ENCODE measurements at regions of chr1 and their contacts with region 1.

Region 1: DNA sequence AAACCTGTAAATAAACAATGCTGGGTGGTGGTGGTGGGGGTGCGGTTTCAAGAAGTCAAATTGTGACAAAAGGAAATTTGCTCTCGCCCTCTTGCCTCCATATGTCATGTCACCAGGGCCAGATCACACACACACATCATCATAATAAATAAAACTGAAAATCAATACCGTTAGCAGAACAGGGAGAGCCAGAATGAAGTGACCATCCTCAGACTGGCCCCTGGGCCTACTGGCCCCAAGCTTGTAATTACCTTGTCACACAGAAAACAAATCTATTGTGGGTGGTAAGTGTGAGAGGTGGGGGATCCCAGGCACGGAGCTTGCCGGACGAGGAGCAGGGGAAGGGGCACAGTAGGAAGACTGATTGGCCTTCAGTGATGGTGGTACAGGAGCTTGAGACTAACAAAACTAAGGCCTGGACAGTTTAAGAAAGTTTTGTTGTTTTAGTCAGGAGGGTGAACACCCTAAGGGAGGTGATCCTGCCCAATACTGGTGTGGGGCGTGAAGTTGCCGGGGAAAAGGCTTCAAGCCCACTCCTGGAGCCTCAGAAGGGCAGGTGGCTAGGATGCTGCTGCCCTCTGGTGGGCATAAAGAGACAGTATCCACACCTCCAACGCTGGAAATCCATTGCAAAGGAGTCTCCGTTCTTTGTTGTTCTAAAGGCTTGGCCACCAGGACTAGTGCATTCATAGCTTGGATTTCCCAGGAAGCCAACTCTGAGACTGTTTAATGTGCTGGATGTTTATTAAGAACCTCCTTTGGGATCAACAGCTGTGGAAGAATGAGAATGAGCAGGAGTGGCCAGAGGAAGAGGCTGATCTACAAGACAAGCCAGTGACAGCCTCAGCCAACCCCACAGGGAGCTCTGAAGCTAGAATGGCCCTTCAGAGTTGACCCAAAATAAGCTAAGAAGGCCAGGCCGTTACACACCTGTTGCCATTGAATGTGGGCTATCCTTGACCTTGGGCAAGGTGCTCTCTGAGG is 8.1 kb upstream of the C1orf216 start:
- DNase-seq: peak; percentile 54
- H3K4me3 Mint-ChIP-seq: no peak overlapping the region
- H3K27ac Mint-ChIP-seq: no peak overlapping the region
- H3K4me1 Mint-ChIP-seq: no peaks in the 10 kb centered on the region
- H3K27me3 Mint-ChIP-seq: no peaks in the 10 kb centered on the region

Region 2: GRCh38 chr1:35564037-35564883 is 162.5 kb before region 1 on chr1:
- CTCF ChIA-PET with region 1: interaction called, 15 read pairs
- intact Hi-C with region 1: loop called (anchors 1 kb)
- DNase-seq: peak; percentile 92
- H3K4me3 Mint-ChIP-seq: no peak overlapping the region
- H3K27ac Mint-ChIP-seq: no peak overlapping the region
- H3K4me1 Mint-ChIP-seq: peaks cover 16% of the 10 kb centered on the region
- H3K27me3 Mint-ChIP-seq: no peaks in the 10 kb centered on the region

Region 3: GRCh38 chr1:35577071-35577998 is 149.4 kb before region 1 on chr1:
- CTCF ChIA-PET with region 1: interaction called, 21 read pairs
- intact Hi-C with region 1: no loop called
- DNase-seq: peak; percentile 76
- H3K4me3 Mint-ChIP-seq: peak overlapping the region; percentile 69
- H3K27ac Mint-ChIP-seq: peak overlapping the region; percentile 13
- H3K4me1 Mint-ChIP-seq: peaks cover 18% of the 10 kb centered on the region
- H3K27me3 Mint-ChIP-seq: peaks cover 20% of the 10 kb centered on the region

Region 4: DNA sequence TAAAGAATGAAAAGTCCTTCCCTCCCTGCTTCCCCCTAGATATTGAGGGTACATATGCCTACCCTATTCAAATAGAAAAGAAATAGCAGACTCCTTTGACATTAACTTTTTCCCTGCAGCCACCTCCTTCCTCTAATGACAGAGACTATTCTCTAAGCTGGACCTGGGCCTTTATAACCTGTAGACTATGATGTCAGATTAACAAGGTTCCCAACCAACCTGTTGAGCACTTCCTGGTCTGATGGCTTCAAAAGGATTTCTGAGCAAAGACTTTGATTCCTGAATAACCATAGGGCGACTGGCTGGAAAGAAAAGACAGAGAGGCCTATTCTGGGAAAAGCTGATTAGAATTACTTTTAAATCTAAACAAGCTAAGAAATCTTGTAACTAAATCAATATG is 10.4 kb after region 1 on chr1:
- CTCF ChIA-PET with region 1: interaction called, 11 read pairs
- intact Hi-C with region 1: no loop called
- DNase-seq: no peak
- H3K4me3 Mint-ChIP-seq: no peak overlapping the region
- H3K27ac Mint-ChIP-seq: no peak overlapping the region
- H3K4me1 Mint-ChIP-seq: no peaks in the 10 kb centered on the region
- H3K27me3 Mint-ChIP-seq: no peaks in the 10 kb centered on the region

Region 5: DNA sequence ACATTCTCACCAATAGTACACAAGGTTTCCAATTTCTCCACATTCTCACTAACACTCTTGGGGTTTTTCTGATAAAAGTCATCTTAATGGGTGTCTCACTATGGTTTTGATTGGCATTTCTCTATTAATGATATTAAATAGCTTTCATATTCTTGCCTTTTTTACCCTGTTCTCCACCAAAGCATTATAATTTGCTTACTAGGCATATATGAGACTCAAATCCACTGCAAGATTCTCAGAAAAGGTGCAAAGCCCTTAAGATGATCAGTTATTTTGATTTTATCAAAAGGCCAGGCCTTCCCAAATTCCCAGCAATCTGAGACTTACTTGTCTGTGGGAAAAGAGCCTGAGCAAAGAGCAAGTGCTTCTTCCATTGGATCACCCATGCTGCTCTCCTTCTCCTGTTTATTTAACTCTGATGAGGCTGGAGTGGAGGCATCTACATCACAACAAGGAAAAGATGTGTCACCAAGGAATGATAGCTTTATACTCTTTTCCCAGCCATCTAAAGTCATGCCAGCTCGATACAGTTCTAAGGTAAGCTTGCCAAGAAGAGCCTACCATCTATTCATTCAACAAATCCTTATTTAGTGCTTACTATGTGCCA is 18.5 kb after region 1 on chr1:
- CTCF ChIA-PET with region 1: interaction called, 10 read pairs
- intact Hi-C with region 1: no loop called
- DNase-seq: no peak
- H3K4me3 Mint-ChIP-seq: no peak overlapping the region
- H3K27ac Mint-ChIP-seq: no peak overlapping the region
- H3K4me1 Mint-ChIP-seq: no peaks in the 10 kb centered on the region
- H3K27me3 Mint-ChIP-seq: no peaks in the 10 kb centered on the region

Region 6: GRCh38 chr1:35769759-35770446 is 43.2 kb after region 1 on chr1 and contains the start of gene CLSPN:
- CTCF ChIA-PET with region 1: interaction called, 23 read pairs
- intact Hi-C with region 1: no loop called
- DNase-seq: peak; percentile 98
- H3K4me3 Mint-ChIP-seq: peak within 1 kb of the TSS; percentile 98
- H3K27ac Mint-ChIP-seq: peak within 1 kb of the TSS; percentile 97
- H3K4me1 Mint-ChIP-seq: peaks cover 8% of the 10 kb centered on the region
- H3K27me3 Mint-ChIP-seq: no peaks in the 10 kb centered on the region
- total RNA-seq, gene CLSPN: 48.9 to 51.8 TPM

Measured in activated naive CD4-positive, alpha-beta T cell treated with anti-CD3 and anti-CD28 coated beads for 36 hours (primary cell).